AG04449 (cell line): ENCODE measurements at regions of chr11 and their contacts with region 1.

Region 1: GRCh38 chr11:67401495-67402191 is at the start of gene PPP1CA:
- DNase-seq: no peak
- H3K4me3 ChIP-seq: peak within 1 kb of the TSS; percentile 86
- CTCF ChIP-seq: peak; percentile 33

Region 2: DNA sequence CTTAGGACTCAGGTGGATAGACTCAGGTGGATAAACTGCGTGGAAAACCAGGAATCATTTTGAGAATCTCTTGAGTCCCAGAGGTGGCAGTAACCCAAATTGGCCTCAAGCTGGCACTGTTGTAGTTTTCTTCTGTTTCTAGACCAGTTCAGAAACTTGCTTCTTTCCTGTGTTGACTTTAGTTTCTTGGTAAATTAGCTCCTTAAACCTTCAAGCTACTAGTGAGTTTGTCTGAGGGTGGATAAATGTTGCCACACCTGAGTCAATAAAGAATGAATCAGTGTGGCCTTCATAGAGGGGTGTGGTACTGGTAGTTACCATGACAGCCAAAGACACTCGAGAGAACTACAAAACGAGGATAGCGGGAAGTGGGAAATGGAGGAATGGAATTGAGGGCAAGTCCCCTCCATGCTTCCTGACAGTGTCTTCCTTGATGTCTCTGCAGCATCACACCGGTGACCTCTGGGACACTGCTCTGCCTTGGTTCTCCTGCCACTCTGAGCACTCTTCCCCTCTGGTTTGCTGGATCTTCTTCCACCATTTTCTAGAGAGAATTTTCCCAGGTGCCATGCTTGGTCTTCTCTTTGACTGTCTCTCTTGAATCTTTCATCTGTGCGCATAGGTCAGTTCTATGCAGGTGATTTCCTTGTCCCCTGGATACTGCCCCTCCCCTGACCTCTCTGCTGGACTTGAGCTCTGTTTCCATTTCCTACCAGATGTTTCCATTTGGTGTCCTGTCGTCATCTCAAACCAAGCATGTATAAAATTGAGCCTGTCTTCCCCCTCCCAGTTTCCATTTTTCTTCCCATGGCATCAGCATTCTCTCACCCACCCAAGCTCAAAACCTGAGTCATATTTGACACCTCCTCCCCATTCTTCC is 55.5 kb before region 1 on chr11:
- CTCF ChIA-PET with region 1: interaction called, 2,108 read pairs
- POLR2A ChIA-PET with region 1: interaction called, 4 read pairs
- DNase-seq: no peak
- H3K4me3 ChIP-seq: no peak overlapping the region
- CTCF ChIP-seq: peak; percentile 70

Region 3: GRCh38 chr11:67391304-67392132 is 10.1 kb before region 1 on chr11 and contains the start of gene RAD9A:
- CTCF ChIA-PET with region 1: interaction called, 2,108 read pairs
- POLR2A ChIA-PET with region 1: interaction called, 31 read pairs
- DNase-seq: no peak
- H3K4me3 ChIP-seq: peak within 1 kb of the TSS; percentile 95
- CTCF ChIP-seq: no peak

Region 4: DNA sequence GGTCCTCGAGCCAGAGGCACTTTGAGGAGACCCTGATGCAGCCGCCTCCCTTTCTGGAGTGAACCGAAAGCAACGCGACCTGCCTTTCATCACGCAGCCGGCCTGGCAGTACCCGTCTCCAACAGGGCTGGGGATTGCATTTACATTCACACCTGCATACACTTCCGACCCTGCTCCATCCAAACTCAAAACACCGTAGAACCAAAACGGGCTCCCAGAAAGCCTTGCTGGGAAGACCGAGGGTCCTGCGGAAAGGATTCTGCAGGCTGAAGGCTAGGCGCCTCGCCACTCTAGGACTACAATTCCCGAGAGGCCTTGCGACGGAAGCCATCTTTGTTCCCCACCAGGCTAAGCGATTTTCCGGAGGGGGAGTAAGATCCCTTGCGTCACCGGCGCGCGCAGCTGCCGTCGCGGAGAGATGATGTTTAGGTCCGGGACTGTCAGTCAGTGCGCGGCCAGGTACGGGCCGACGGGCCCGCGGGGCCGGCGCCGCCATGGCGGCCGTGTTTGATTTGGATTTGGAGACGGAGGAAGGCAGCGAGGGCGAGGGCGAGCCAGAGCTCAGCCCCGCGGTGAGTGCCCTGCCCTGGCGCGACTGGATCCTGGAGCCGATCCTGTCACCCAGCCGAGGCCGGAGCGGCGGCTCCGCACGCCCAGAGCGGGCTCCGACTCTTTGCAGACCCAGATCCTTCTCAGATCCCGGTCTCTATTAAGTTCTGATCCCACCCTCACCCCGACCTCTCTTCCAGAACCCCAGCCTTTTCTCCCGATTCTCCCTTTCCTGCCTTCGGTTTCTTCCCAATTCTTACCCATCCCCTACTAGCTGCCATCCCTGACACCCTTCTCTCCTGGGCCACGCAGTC is 26.6 kb after region 1 on chr11 and contains the start of gene RPS6KB2:
- CTCF ChIA-PET with region 1: interaction called, 15 read pairs
- POLR2A ChIA-PET with region 1: interaction called, 3 read pairs
- DNase-seq: peak; percentile 80
- H3K4me3 ChIP-seq: peak within 1 kb of the TSS; percentile 97
- CTCF ChIP-seq: no peak

Region 5: GRCh38 chr11:67505605-67506396 is 104.2 kb after region 1 on chr11:
- CTCF ChIA-PET with region 1: interaction called, 14 read pairs
- POLR2A ChIA-PET with region 1: interaction called, 3 read pairs
- DNase-seq: no peak
- H3K4me3 ChIP-seq: peak overlapping the region; percentile 76
- CTCF ChIP-seq: peak; percentile 98